ENCODE measurements at regions of chr13 and their contacts with region 1.

Region 1: GRCh38 chr13:29771247-29771646 is 79.2 kb downstream of the UBL3 start:
- DNase-seq: peak in 1 of 2 donors; percentile 72
- ATAC-seq: peak in 2 of 3 donors; percentile 53 to 57
- H3K4me3 ChIP-seq: no peak overlapping the region
- H3K4me3 Mint-ChIP-seq: no peak overlapping the region
- H3K27ac ChIP-seq: no peak overlapping the region
- H3K27ac Mint-ChIP-seq: no peak overlapping the region
- H3K4me1 ChIP-seq: no peaks in the 10 kb centered on the region
- H3K4me1 Mint-ChIP-seq: no peaks in the 10 kb centered on the region
- H3K27me3 ChIP-seq: no peaks in the 10 kb centered on the region
- H3K27me3 Mint-ChIP-seq: no peaks in the 10 kb centered on the region
- CTCF ChIP-seq: peak; percentile 69

Region 2: GRCh38 chr13:29923554-29924481 is 152.6 kb after region 1 on chr13:
- intact Hi-C with region 1: loop called (anchors 1 kb)
- DNase-seq: peak; percentile 62 to 73
- ATAC-seq: peak; percentile 68 to 89 (median 85)
- H3K4me3 ChIP-seq: no peak overlapping the region
- H3K4me3 Mint-ChIP-seq: no peak overlapping the region
- H3K27ac ChIP-seq: no peak overlapping the region
- H3K27ac Mint-ChIP-seq: peak overlapping the region in 1 of 2 donors; percentile 16
- H3K4me1 ChIP-seq: peaks cover 4% of the 10 kb centered on the region
- H3K4me1 Mint-ChIP-seq: peaks cover 11 to 21% of the 10 kb centered on the region in 2 donors
- H3K27me3 ChIP-seq: no peaks in the 10 kb centered on the region
- H3K27me3 Mint-ChIP-seq: peaks cover under 1 to 3% of the 10 kb centered on the region in 2 donors
- CTCF ChIP-seq: peak; percentile 92